ENCODE measurements at regions of chr1 and their contacts with region 1.

Region 1: GRCh38 chr1:212432706-212433576 is at the start of gene NENF:
- DNase-seq: peak; percentile 81 to 92
- H3K4me3 ChIP-seq: peak within 1 kb of the TSS; percentile 64
- H3K4me3 Mint-ChIP-seq: peak within 1 kb of the TSS; percentile 79
- H3K27ac Mint-ChIP-seq: peak within 1 kb of the TSS; percentile 88
- H3K4me1 ChIP-seq: peaks cover 38% of the 10 kb centered on the region
- H3K4me1 Mint-ChIP-seq: peaks cover 45% of the 10 kb centered on the region
- H3K27me3 ChIP-seq: no peaks in the 10 kb centered on the region
- H3K27me3 Mint-ChIP-seq: no peaks in the 10 kb centered on the region
- CTCF ChIP-seq: no peak
- total RNA-seq, gene NENF: 90.1 and 95.7 TPM in 2 replicates

Region 2: DNA sequence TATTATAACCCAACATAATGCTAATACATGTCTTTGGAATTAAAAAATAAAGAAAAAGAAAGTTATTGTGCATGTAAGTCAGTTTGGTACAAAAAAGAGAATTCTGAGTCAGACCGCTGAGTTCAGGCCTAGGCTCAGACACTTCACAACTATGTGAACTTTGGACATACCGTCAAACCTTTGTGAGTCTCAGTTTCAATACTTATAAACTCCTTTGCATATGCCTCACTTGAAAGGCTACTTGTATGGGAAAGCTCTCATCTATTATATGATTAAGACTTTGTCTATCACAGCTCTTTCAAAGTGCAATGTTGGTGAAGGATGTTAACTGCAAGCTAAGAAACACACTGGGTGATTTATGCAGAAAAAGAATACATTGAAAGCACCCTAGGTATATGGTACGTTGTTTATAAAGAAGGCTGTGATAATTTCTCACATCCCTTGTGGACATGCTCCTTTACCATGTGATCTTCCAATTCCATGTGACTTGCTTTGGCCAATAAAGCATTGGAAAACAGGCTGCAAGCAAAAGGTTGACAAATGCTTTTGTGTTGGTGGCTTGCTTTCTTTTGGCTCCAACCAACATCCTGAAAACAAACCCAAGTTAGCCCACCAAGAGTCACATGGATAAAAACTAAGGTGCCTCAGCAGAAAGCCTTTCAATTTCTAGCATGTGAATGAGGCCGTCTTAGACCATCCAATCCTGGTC is 447.2 kb before region 1 on chr1:
- CTCF ChIA-PET with region 1: no interaction called
- POLR2A ChIA-PET with region 1: no interaction called
- intact Hi-C with region 1: no loop called
- DNase-seq: peak in 1 of 2 experiments; percentile 5
- H3K4me3 ChIP-seq: no peak overlapping the region
- H3K4me3 Mint-ChIP-seq: no peak overlapping the region
- H3K27ac Mint-ChIP-seq: no peak overlapping the region
- H3K4me1 ChIP-seq: peaks cover 13% of the 10 kb centered on the region
- H3K4me1 Mint-ChIP-seq: no peaks in the 10 kb centered on the region
- H3K27me3 ChIP-seq: no peaks in the 10 kb centered on the region
- H3K27me3 Mint-ChIP-seq: no peaks in the 10 kb centered on the region
- CTCF ChIP-seq: no peak

Region 3: GRCh38 chr1:212414328-212415106 is 18.4 kb before region 1 on chr1 and contains the start of gene PACC1:
- CTCF ChIA-PET with region 1: no interaction called
- POLR2A ChIA-PET with region 1: no interaction called
- intact Hi-C with region 1: loop called (anchors 1 kb)
- DNase-seq: peak; percentile 95 to 96
- H3K4me3 ChIP-seq: peak within 1 kb of the TSS; percentile 74
- H3K4me3 Mint-ChIP-seq: peak within 1 kb of the TSS; percentile 83
- H3K27ac Mint-ChIP-seq: peak within 1 kb of the TSS; percentile 60
- H3K4me1 ChIP-seq: peaks cover 7% of the 10 kb centered on the region
- H3K4me1 Mint-ChIP-seq: peaks cover 17% of the 10 kb centered on the region
- H3K27me3 ChIP-seq: no peaks in the 10 kb centered on the region
- H3K27me3 Mint-ChIP-seq: no peaks in the 10 kb centered on the region
- CTCF ChIP-seq: peak; percentile 16 to 17
- total RNA-seq, gene PACC1: 15.6 and 15.7 TPM in 2 replicates

Region 4: GRCh38 chr1:212450331-212450881 is 17.5 kb after region 1 on chr1:
- CTCF ChIA-PET with region 1: interaction called, 10 read pairs
- POLR2A ChIA-PET with region 1: no interaction called
- intact Hi-C with region 1: loop called (anchors 2 kb)
- DNase-seq: no peak
- H3K4me3 ChIP-seq: no peak overlapping the region
- H3K4me3 Mint-ChIP-seq: no peak overlapping the region
- H3K27ac Mint-ChIP-seq: no peak overlapping the region
- H3K4me1 ChIP-seq: peaks cover 14% of the 10 kb centered on the region; the same call in 1 of the 2 replicates
- H3K4me1 Mint-ChIP-seq: peaks cover 18% of the 10 kb centered on the region
- H3K27me3 ChIP-seq: no peaks in the 10 kb centered on the region
- H3K27me3 Mint-ChIP-seq: no peaks in the 10 kb centered on the region
- CTCF ChIP-seq: no peak